Endothelial cell of umbilical vein (primary cell): ENCODE measurements at regions of chr5 and their contacts with region 1.

Region 1: GRCh38 chr5:146049014-146049703 is 56.2 kb downstream of the PLAC8L1 start:
- DNase-seq: peak; percentile 74
- H3K4me3 ChIP-seq: no peak overlapping the region
- H3K27ac ChIP-seq: no peak overlapping the region
- H3K4me1 ChIP-seq: no peaks in the 10 kb centered on the region
- H3K27me3 ChIP-seq: peaks cover 0 to 7% of the 10 kb centered on the region in 2 experiments
- CTCF ChIP-seq: peak; percentile 75
- POLR2A ChIP-seq: no peak

Region 2: GRCh38 chr5:145237843-145238242 is 811.3 kb before region 1 on chr5:
- CTCF ChIA-PET with region 1: no interaction called
- POLR2A ChIA-PET with region 1: no interaction called
- dilution Hi-C with region 1: no loop called
- intact Hi-C with region 1: loop called (anchors 5 kb)
- DNase-seq: peak; percentile 72
- H3K4me3 ChIP-seq: no peak overlapping the region
- H3K27ac ChIP-seq: no peak overlapping the region
- H3K4me1 ChIP-seq: peaks cover 3% of the 10 kb centered on the region
- H3K27me3 ChIP-seq: no peaks in the 10 kb centered on the region
- CTCF ChIP-seq: peak; percentile 71 to 73
- POLR2A ChIP-seq: no peak

Region 3: DNA sequence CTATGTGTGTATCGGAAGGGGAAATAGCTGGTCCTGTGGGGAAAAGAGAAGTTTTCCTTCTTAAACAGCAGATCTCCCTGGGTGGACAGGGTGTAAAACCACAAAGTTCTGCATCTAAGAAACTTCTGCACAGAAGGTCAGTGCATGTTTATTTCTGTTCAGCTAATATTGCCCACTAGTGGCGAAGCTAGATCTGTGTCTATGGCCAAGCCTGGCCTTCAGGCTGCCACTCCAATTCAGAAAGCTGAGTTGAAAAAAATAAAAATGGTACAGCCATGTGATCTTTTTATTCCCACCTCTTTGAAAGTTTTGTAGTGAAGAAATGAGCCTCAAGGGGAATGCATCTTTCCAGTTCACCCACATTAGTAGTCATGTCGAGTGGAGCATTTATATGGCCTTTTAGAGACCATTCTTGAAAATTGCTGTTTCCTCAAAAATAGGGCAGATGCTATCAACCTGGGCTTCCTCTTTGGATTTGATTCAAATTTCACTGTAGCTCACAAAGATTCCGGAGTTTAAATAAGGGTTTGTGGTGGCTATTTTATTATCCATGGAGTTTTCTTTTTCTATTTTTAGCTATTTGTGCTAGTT is 702.0 kb before region 1 on chr5:
- CTCF ChIA-PET with region 1: no interaction called
- POLR2A ChIA-PET with region 1: no interaction called
- dilution Hi-C with region 1: no loop called
- intact Hi-C with region 1: loop called (anchors 5 kb)
- DNase-seq: peak; percentile 64
- H3K4me3 ChIP-seq: no peak overlapping the region
- H3K27ac ChIP-seq: no peak overlapping the region
- H3K4me1 ChIP-seq: peaks cover 21% of the 10 kb centered on the region
- H3K27me3 ChIP-seq: no peaks in the 10 kb centered on the region
- CTCF ChIP-seq: peak; percentile 50 to 64
- POLR2A ChIP-seq: no peak

Region 4: DNA sequence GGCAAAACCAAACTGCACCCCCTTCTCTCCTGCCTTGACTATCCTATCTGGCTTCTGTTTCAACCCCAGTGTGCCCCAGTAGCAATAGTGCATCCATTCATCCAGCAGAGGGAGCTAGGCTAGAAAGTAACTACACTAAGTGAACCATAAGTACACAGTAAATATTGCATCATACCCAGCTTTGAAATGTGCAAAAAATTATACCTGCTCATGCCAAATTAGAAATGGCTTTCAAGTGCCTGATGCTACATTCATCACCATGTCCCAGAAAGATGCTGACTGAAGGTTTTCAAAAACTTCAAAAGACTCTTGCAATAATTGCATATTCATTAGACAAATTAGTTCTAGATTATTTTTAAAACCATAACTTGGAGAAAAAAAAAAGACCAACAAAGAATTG is 367.5 kb before region 1 on chr5:
- CTCF ChIA-PET with region 1: interaction called, 11 read pairs
- POLR2A ChIA-PET with region 1: no interaction called
- dilution Hi-C with region 1: no loop called
- intact Hi-C with region 1: loop called (anchors 1 kb)
- DNase-seq: peak; percentile 75
- H3K4me3 ChIP-seq: no peak overlapping the region
- H3K27ac ChIP-seq: no peak overlapping the region
- H3K4me1 ChIP-seq: no peaks in the 10 kb centered on the region
- H3K27me3 ChIP-seq: no peaks in the 10 kb centered on the region
- CTCF ChIP-seq: peak; percentile 78 to 86
- POLR2A ChIP-seq: no peak

Region 5: GRCh38 chr5:145811834-145812625 is 237.1 kb before region 1 on chr5:
- CTCF ChIA-PET with region 1: interaction called, 11 read pairs
- POLR2A ChIA-PET with region 1: no interaction called
- dilution Hi-C with region 1: no loop called
- intact Hi-C with region 1: no loop called
- DNase-seq: peak; percentile 69
- H3K4me3 ChIP-seq: no peak overlapping the region
- H3K27ac ChIP-seq: no peak overlapping the region
- H3K4me1 ChIP-seq: no peaks in the 10 kb centered on the region
- H3K27me3 ChIP-seq: no peaks in the 10 kb centered on the region
- CTCF ChIP-seq: peak; percentile 27 to 43
- POLR2A ChIP-seq: no peak

Region 6: GRCh38 chr5:145908205-145908945 is 140.8 kb before region 1 on chr5:
- CTCF ChIA-PET with region 1: interaction called, 11 read pairs
- POLR2A ChIA-PET with region 1: no interaction called
- dilution Hi-C with region 1: no loop called
- intact Hi-C with region 1: loop called (anchors 1 kb)
- DNase-seq: no peak
- H3K4me3 ChIP-seq: no peak overlapping the region
- H3K27ac ChIP-seq: no peak overlapping the region
- H3K4me1 ChIP-seq: no peaks in the 10 kb centered on the region
- H3K27me3 ChIP-seq: no peaks in the 10 kb centered on the region
- CTCF ChIP-seq: peak in 1 of 2 donors; percentile 3
- POLR2A ChIP-seq: no peak

Region 7: DNA sequence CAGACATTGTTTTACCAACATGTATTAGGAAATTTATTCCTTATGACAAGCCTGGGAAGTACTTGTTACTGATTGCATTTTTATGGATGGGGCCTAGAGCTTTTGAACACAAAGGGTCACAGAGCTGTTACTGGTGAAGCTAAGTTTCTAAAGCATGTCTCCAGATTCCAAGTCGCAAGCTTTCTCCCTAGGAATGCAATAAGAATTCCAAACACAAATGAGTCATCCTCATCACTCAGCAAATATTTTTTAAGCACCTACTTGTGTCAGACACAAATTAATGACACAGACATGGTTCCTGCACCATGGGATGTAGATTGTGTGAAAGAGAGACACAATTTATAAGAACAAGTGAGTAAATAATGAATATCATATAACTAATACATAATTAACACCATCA is 123.8 kb before region 1 on chr5:
- CTCF ChIA-PET with region 1: no interaction called
- POLR2A ChIA-PET with region 1: no interaction called
- dilution Hi-C with region 1: no loop called
- intact Hi-C with region 1: loop called (anchors 5 kb)
- DNase-seq: peak; percentile 80
- H3K4me3 ChIP-seq: no peak overlapping the region
- H3K27ac ChIP-seq: peak overlapping the region; percentile 37
- H3K4me1 ChIP-seq: peaks cover 19% of the 10 kb centered on the region
- H3K27me3 ChIP-seq: no peaks in the 10 kb centered on the region
- CTCF ChIP-seq: no peak
- POLR2A ChIP-seq: no peak